ENCODE measurements at regions of chr20 and their contacts with region 1.

Region 1: DNA sequence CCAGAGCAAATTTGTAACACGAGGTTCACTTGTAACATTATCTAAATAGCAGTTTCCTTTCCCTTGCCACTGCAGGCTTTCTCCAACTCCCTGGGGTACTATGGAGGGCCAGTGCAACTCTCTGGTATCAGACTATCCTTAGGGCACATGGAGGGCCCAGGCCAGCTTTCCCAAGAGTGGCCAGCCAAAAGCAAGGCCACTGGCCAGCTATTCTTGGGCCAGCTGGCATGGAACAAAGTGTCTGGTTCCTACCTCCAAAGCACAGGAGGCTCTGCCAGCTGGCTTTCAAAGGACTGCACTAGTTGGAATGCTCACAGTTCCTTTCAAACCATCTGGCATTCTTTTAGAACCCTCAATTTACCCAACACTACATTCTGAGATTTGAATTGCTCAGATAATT is 8.7 kb downstream of the RNF24 start:
- DNase-seq: no peak
- ATAC-seq: no peak
- H3K4me3 ChIP-seq: no peak overlapping the region
- H3K27ac ChIP-seq: no peak overlapping the region
- H3K4me1 ChIP-seq: no peaks in the 10 kb centered on the region
- H3K27me3 ChIP-seq: no peaks in the 10 kb centered on the region
- CTCF ChIP-seq: no peak

Region 2: GRCh38 chr20:3937618-3938017 is 69.0 kb before region 1 on chr20:
- CTCF ChIA-PET with region 1: no interaction called
- POLR2A ChIA-PET with region 1: no interaction called
- intact Hi-C with region 1: no loop called
- DNase-seq: no peak
- ATAC-seq: no peak
- H3K4me3 ChIP-seq: no peak overlapping the region
- H3K27ac ChIP-seq: no peak overlapping the region
- H3K4me1 ChIP-seq: peaks cover 5% of the 10 kb centered on the region; the same call in 1 of the 2 replicates
- H3K27me3 ChIP-seq: no peaks in the 10 kb centered on the region
- CTCF ChIP-seq: no peak

Region 3: DNA sequence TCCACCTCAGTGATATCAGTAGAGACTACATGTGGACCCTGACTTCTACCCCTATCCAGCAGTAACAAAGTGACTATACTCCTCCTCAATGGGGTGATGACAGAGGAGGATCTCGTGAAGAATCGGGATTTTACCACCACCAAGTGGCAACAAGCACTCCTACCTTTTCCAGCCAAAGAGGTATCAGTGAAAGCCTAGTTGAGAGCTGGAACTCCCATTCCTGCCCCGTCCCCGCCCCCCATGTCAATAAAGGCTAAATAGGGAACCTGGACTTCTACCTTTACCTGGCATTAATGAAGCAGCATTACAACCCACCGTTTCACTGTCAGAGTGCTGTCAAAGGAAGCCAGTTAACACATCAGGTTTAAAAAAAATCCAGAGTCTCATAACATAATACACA is 36.6 kb before region 1 on chr20:
- CTCF ChIA-PET with region 1: no interaction called
- POLR2A ChIA-PET with region 1: interaction called, 4 read pairs
- intact Hi-C with region 1: loop called (anchors 1 kb)
- DNase-seq: no peak
- ATAC-seq: no peak
- H3K4me3 ChIP-seq: no peak overlapping the region
- H3K27ac ChIP-seq: no peak overlapping the region
- H3K4me1 ChIP-seq: no peaks in the 10 kb centered on the region
- H3K27me3 ChIP-seq: no peaks in the 10 kb centered on the region
- CTCF ChIP-seq: no peak

Region 4: GRCh38 chr20:4076671-4077070 is 70.0 kb after region 1 on chr20:
- CTCF ChIA-PET with region 1: no interaction called
- POLR2A ChIA-PET with region 1: no interaction called
- intact Hi-C with region 1: no loop called
- DNase-seq: peak; percentile 90
- ATAC-seq: peak; percentile 88
- H3K4me3 ChIP-seq: no peak overlapping the region
- H3K27ac ChIP-seq: peak overlapping the region; percentile 21; the same call in 1 of the 2 replicates
- H3K4me1 ChIP-seq: peaks cover 12% of the 10 kb centered on the region
- H3K27me3 ChIP-seq: no peaks in the 10 kb centered on the region
- CTCF ChIP-seq: no peak